T-cell (primary cell): ENCODE measurements at regions of chr6 and their contacts with region 1.

Region 1: GRCh38 chr6:149252622-149253021 is 64.9 kb upstream of the TAB2 start:
- DNase-seq: no peak
- ATAC-seq: no peak
- H3K4me3 ChIP-seq: no peak overlapping the region
- H3K4me3 Mint-ChIP-seq: no peak overlapping the region
- H3K27ac ChIP-seq: no peak overlapping the region
- H3K27ac Mint-ChIP-seq: no peak overlapping the region
- H3K4me1 ChIP-seq: peaks cover 6 to 9% of the 10 kb centered on the region in 2 experiments
- H3K4me1 Mint-ChIP-seq: peaks cover 20 to 33% (median 21%) of the 10 kb centered on the region in 3 donors
- H3K27me3 ChIP-seq: no peaks in the 10 kb centered on the region
- H3K27me3 Mint-ChIP-seq: no peaks in the 10 kb centered on the region

Region 2: DNA sequence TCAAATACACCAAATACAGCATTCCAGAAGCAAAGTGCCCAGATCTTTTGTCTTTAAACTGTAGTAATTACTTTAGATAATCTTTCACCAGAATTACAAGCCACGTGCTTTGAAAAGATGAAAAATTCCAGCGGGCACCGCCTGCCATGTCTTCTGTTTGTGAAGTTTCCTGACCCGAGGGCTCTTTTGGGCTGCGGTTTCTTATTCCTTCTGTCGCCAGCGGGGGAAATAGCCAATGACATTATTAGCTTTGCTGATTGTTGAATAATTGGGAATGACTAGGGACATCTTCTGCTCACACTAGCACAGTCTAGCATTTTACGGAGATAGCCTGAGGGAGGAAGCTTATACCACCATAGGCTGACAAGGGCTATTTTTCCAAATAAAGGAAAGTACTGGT is 1619.4 kb before region 1 on chr6:
- CTCF ChIA-PET with region 1: no interaction called
- POLR2A ChIA-PET with region 1: no interaction called
- DNase-seq: no peak
- ATAC-seq: no peak
- H3K4me3 ChIP-seq: no peak overlapping the region
- H3K4me3 Mint-ChIP-seq: no peak overlapping the region
- H3K27ac ChIP-seq: no peak overlapping the region
- H3K27ac Mint-ChIP-seq: no peak overlapping the region
- H3K4me1 ChIP-seq: no peaks in the 10 kb centered on the region
- H3K4me1 Mint-ChIP-seq: no peaks in the 10 kb centered on the region
- H3K27me3 ChIP-seq: no peaks in the 10 kb centered on the region
- H3K27me3 Mint-ChIP-seq: no peaks in the 10 kb centered on the region

Region 3: DNA sequence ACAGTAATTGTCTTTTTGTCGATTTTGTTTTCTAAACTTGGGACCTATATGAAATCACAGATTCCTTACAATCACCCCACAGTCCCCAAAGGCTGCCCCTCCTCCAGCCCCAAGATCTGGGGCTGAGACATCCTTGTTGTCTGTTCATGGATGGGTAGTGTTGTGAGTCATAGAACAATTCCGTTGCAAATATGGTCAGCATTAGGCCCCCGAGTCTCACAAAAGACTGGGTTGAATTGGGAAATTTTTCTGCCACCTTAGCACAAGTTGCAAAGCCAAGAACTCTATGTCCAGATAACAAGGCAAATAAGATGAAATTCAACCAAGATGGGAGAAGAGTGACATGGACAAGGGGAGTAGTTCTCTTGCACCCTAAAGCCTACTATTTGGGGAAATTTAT is 54.3 kb after region 1 on chr6:
- CTCF ChIA-PET with region 1: no interaction called
- POLR2A ChIA-PET with region 1: no interaction called
- DNase-seq: no peak
- ATAC-seq: no peak
- H3K4me3 ChIP-seq: no peak overlapping the region
- H3K4me3 Mint-ChIP-seq: no peak overlapping the region
- H3K27ac ChIP-seq: no peak overlapping the region
- H3K27ac Mint-ChIP-seq: no peak overlapping the region
- H3K4me1 ChIP-seq: no peaks in the 10 kb centered on the region
- H3K4me1 Mint-ChIP-seq: no peaks in the 10 kb centered on the region
- H3K27me3 ChIP-seq: no peaks in the 10 kb centered on the region
- H3K27me3 Mint-ChIP-seq: no peaks in the 10 kb centered on the region

Region 4: DNA sequence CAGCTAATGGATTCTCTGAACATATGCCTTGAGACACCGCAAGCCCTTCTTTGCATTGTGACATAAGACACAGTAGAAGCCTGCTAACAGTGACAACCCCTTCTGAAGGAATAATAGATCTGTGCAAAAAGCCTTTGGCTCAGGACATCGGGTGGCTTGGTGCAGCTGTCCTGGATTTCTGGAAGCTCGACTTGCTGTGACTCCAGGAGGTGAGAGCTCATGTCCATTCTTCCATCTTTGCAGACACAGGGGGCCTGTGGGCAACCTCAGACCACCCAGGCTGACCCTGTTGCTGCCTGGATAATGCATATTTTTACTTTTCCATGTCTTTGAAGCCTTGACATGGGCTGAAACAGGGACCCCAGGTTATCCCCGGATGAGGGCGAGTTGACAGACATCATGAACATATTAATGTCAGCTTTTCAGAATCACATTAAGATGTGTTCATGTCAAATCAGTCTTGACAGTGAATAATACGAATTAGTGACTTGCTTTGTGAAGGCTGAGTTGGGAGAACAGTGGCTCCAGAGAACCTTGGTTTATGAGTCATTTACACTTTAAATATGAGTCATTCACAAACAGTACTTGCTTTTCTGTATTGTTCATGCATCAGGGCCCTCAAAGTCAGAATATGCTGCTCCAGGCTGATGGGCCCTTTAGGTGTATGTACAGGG is 1049.4 kb after region 1 on chr6:
- CTCF ChIA-PET with region 1: no interaction called
- POLR2A ChIA-PET with region 1: interaction called in 1 of 2 experiments, 10 read pairs
- DNase-seq: no peak
- ATAC-seq: peak in 2 of 4 experiments; percentile 15 to 52
- H3K4me3 ChIP-seq: no peak overlapping the region
- H3K4me3 Mint-ChIP-seq: no peak overlapping the region
- H3K27ac ChIP-seq: no peak overlapping the region
- H3K27ac Mint-ChIP-seq: no peak overlapping the region
- H3K4me1 ChIP-seq: no peaks in the 10 kb centered on the region
- H3K4me1 Mint-ChIP-seq: peaks cover 0 to 1% (median 0%) of the 10 kb centered on the region in 3 donors
- H3K27me3 ChIP-seq: peaks cover 0 to 4% of the 10 kb centered on the region in 2 experiments
- H3K27me3 Mint-ChIP-seq: peaks cover 13 to 14% of the 10 kb centered on the region in 2 donors